ENCODE measurements at regions of chr10 and their contacts with region 1.

Region 1: GRCh38 chr10:69312533-69312932 is 34.2 kb downstream of the HK1 start:
- DNase-seq: no peak
- H3K4me3 Mint-ChIP-seq: no peak overlapping the region
- H3K27ac Mint-ChIP-seq: no peak overlapping the region
- H3K4me1 Mint-ChIP-seq: peaks cover 21% of the 10 kb centered on the region
- H3K27me3 Mint-ChIP-seq: no peaks in the 10 kb centered on the region

Region 2: GRCh38 chr10:69051303-69051702 is 261.2 kb before region 1 on chr10:
- intact Hi-C with region 1: loop called (anchors 5 kb)
- DNase-seq: peak; percentile 34
- H3K4me3 Mint-ChIP-seq: no peak overlapping the region
- H3K27ac Mint-ChIP-seq: peak overlapping the region; percentile 79
- H3K4me1 Mint-ChIP-seq: peaks cover 64% of the 10 kb centered on the region
- H3K27me3 Mint-ChIP-seq: no peaks in the 10 kb centered on the region

Region 3: DNA sequence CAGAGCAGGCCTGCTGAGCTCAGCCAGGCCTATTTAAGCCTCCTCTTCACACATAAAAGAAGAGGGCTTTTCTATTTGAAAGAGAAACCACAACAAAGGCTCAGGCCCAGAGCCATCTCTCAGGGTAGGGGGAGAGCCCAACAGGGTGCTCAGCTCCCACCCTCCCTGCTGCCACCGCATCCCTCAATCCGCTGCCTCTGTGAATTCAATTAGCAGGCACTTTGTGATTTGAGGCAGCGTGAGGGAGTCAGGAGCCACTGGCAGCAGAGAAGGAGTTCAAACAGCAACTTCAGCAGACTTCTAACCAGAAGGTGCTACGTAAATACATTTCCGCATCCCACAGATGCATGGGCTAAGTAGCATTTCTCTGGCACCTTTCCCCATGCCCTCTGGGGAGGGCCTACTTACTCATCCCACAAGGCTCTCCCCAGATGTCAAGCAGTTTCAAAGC is 1024.7 kb after region 1 on chr10:
- intact Hi-C with region 1: no loop called
- DNase-seq: no peak
- H3K4me3 Mint-ChIP-seq: no peak overlapping the region
- H3K27ac Mint-ChIP-seq: no peak overlapping the region
- H3K4me1 Mint-ChIP-seq: peaks cover 1% of the 10 kb centered on the region
- H3K27me3 Mint-ChIP-seq: no peaks in the 10 kb centered on the region